ENCODE measurements at regions of chr2 and their contacts with region 1.

Region 1: DNA sequence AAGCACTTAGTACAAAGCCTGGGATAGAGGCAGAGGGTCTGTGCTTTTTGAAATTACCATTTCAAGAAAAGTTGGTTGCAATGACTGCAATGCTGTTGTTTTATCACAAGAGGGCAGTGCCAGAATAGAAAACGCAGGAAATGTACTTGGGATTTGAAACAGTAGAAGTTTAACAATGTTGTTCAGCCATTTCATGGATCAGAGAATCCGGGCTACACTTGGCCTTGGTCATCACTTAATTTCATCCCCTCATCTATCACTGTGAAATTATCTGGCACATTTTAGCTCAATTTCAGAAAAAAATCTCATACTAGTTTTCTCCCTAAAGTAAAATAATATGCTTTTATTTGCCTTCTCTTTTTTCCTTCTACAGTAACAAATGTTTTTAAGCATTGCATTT is 70.8 kb downstream of the RAPGEF4 start:
- DNase-seq: peak in 1 of 2 experiments; percentile 40
- H3K4me3 ChIP-seq: no peak overlapping the region
- H3K4me3 Mint-ChIP-seq: no peak overlapping the region
- H3K27ac Mint-ChIP-seq: no peak overlapping the region
- H3K4me1 ChIP-seq: no peaks in the 10 kb centered on the region
- H3K4me1 Mint-ChIP-seq: no peaks in the 10 kb centered on the region
- H3K27me3 ChIP-seq: no peaks in the 10 kb centered on the region; the same call in 1 of the 2 replicates
- H3K27me3 Mint-ChIP-seq: peaks cover 3% of the 10 kb centered on the region
- CTCF ChIP-seq: peak; percentile 80 to 90

Region 2: DNA sequence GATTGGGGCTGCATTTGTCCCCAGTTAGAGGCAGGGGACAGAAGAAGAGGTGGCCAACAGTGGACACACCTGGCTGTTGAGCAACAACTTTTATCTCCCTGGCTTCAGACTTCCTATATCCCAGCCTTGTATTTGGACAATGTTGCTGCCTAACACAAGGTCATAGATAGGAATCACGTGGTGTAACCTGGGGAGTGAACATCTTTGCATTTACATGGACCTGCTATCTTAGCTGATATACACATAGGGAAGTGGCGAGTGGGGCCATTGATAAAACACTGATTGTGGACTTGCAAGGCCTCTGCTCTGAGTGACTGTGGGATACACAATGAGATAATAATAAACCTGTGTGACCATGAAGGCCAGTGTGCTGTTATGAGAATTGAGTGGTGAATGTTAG is 43.9 kb before region 1 on chr2:
- CTCF ChIA-PET with region 1: no interaction called
- POLR2A ChIA-PET with region 1: no interaction called
- intact Hi-C with region 1: no loop called
- DNase-seq: no peak
- H3K4me3 ChIP-seq: no peak overlapping the region
- H3K4me3 Mint-ChIP-seq: no peak overlapping the region
- H3K27ac Mint-ChIP-seq: no peak overlapping the region
- H3K4me1 ChIP-seq: no peaks in the 10 kb centered on the region
- H3K4me1 Mint-ChIP-seq: no peaks in the 10 kb centered on the region
- H3K27me3 ChIP-seq: no peaks in the 10 kb centered on the region
- H3K27me3 Mint-ChIP-seq: no peaks in the 10 kb centered on the region
- CTCF ChIP-seq: no peak

Region 3: GRCh38 chr2:172864182-172864581 is 57.7 kb after region 1 on chr2:
- CTCF ChIA-PET with region 1: interaction called, 3 read pairs
- POLR2A ChIA-PET with region 1: no interaction called
- intact Hi-C with region 1: loop called (anchors 2 kb)
- DNase-seq: peak in 1 of 2 experiments; percentile 42
- H3K4me3 ChIP-seq: no peak overlapping the region
- H3K4me3 Mint-ChIP-seq: no peak overlapping the region
- H3K27ac Mint-ChIP-seq: no peak overlapping the region
- H3K4me1 ChIP-seq: 0 out of 2 replicates have a peak, but pooled peaks cover 3% of the 10 kb centered on the region
- H3K4me1 Mint-ChIP-seq: peaks cover 5% of the 10 kb centered on the region
- H3K27me3 ChIP-seq: no peaks in the 10 kb centered on the region
- H3K27me3 Mint-ChIP-seq: no peaks in the 10 kb centered on the region
- CTCF ChIP-seq: peak; percentile 49 to 52

Region 4: DNA sequence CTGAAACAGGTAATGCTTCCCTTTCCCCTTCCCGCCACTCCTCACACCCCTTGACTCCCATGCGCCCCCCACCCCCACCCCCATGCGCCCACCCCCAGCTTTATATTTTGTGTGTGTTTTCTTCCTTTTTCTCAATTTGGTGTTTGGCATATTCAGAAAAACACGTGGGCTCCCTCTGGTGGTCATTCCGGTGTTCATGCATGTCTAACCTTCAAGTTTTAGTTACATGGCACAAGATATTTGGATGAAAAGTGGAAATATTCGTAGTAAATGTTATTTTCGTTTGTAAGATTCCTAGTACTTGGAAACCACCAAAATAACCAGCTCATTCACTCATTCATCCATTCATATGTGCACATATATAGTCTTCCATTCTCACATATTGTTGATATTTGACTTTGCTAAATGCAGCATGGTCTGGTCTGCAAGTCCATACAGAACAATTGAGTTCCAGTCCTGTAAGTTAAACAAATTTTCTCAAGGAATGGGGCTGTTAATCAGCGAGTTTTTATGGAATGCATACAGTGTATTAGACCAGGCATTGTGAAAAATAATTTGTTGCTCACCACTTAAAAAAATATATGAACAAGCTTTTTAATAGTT is 125.5 kb after region 1 on chr2:
- CTCF ChIA-PET with region 1: interaction called, 7 read pairs
- POLR2A ChIA-PET with region 1: no interaction called
- intact Hi-C with region 1: loop called (anchors 1 kb)
- DNase-seq: peak; percentile 53 to 67
- H3K4me3 ChIP-seq: no peak overlapping the region
- H3K4me3 Mint-ChIP-seq: no peak overlapping the region
- H3K27ac Mint-ChIP-seq: no peak overlapping the region
- H3K4me1 ChIP-seq: peaks cover 8% of the 10 kb centered on the region
- H3K4me1 Mint-ChIP-seq: peaks cover 7% of the 10 kb centered on the region
- H3K27me3 ChIP-seq: no peaks in the 10 kb centered on the region
- H3K27me3 Mint-ChIP-seq: peaks cover 3% of the 10 kb centered on the region
- CTCF ChIP-seq: peak; percentile 55 to 83

Region 5: GRCh38 chr2:173021939-173022371 is 215.5 kb after region 1 on chr2:
- CTCF ChIA-PET with region 1: no interaction called
- POLR2A ChIA-PET with region 1: no interaction called
- intact Hi-C with region 1: loop called (anchors 1 kb)
- DNase-seq: peak in 1 of 2 experiments; percentile 49
- H3K4me3 ChIP-seq: no peak overlapping the region
- H3K4me3 Mint-ChIP-seq: no peak overlapping the region
- H3K27ac Mint-ChIP-seq: no peak overlapping the region
- H3K4me1 ChIP-seq: no peaks in the 10 kb centered on the region; the same call in 1 of the 2 replicates
- H3K4me1 Mint-ChIP-seq: no peaks in the 10 kb centered on the region
- H3K27me3 ChIP-seq: no peaks in the 10 kb centered on the region
- H3K27me3 Mint-ChIP-seq: no peaks in the 10 kb centered on the region
- CTCF ChIP-seq: peak; percentile 24 to 47

Region 6: GRCh38 chr2:173210270-173211196 is 404.0 kb after region 1 on chr2:
- CTCF ChIA-PET with region 1: no interaction called
- POLR2A ChIA-PET with region 1: no interaction called
- intact Hi-C with region 1: loop called (anchors 2 kb)
- DNase-seq: peak; percentile 64 to 72
- H3K4me3 ChIP-seq: no peak overlapping the region
- H3K4me3 Mint-ChIP-seq: no peak overlapping the region
- H3K27ac Mint-ChIP-seq: no peak overlapping the region
- H3K4me1 ChIP-seq: no peaks in the 10 kb centered on the region; the same call in 1 of the 2 replicates
- H3K4me1 Mint-ChIP-seq: no peaks in the 10 kb centered on the region
- H3K27me3 ChIP-seq: no peaks in the 10 kb centered on the region
- H3K27me3 Mint-ChIP-seq: no peaks in the 10 kb centered on the region
- CTCF ChIP-seq: peak; percentile 81 to 91